K562 (cell line): ENCODE measurements at regions of chr6 and their contacts with region 1.

Region 1: DNA sequence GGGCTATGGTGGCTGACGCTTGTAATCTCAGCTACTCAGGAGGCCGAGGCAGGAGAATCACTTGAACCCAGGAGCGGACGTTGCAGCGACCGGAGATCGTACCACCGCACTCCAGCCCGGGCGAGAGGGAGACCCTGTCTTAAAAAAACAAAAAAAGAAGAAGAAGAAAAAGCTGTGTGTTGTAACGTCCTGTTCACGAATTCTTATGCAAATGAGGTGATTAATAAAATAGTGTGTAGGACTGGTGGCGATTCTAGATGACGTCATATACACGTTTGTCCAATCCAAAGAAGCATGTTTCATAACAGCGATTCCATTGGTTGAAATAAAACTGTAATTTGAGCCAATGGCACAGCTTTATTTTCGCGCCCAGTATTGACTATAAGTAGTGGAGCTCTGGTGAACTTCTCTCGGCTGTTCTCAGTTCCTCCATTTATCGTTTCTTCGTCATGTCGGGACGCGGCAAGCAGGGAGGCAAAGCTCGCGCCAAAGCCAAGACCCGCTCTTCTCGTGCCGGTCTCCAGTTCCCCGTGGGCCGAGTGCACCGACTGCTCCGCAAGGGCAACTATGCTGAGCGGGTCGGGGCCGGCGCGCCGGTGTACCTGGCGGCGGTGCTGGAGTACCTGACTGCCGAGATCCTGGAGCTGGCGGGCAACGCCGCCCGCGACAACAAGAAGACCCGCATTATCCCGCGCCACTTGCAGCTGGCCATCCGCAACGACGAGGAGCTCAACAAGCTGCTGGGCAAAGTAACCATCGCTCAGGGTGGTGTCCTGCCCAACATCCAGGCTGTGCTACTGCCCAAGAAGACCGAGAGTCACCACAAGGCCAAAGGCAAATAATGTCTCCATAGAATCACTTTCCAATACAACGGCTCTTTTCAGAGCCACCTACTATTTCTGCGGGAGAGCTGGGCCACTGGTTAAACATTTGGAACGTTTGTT is 47.0 kb downstream of the OR2B2 start:
- DNase-seq: peak; percentile 38 to 84 (median 68)
- ATAC-seq: peak; percentile 49
- H3K4me3 ChIP-seq: peak overlapping the region; percentile 45
- H3K27ac ChIP-seq: peak overlapping the region; percentile 73
- H3K4me1 ChIP-seq: peaks cover 15 to 16% of the 10 kb centered on the region in 2 experiments; a peak in 4 of 5 replicates
- H3K27me3 ChIP-seq: no peaks in the 10 kb centered on the region
- CTCF ChIP-seq: no peak
- EP300 ChIP-seq: no peak
- POLR2A ChIP-seq: peak; percentile 96
- RAD21 ChIP-seq: no peak

Region 2: GRCh38 chr6:27825025-27825793 is 40.0 kb before region 1 on chr6:
- CTCF ChIA-PET with region 1: no interaction called
- POLR2A ChIA-PET with region 1: interaction called, 18 read pairs
- in situ Hi-C with region 1: no loop called
- intact Hi-C with region 1: no loop called
- DNase-seq: peak in 1 of 4 experiments; percentile 12
- ATAC-seq: no peak
- H3K4me3 ChIP-seq: peak overlapping the region; percentile 50
- H3K27ac ChIP-seq: peak overlapping the region; percentile 83
- H3K4me1 ChIP-seq: peaks cover 0 to 8% of the 10 kb centered on the region in 2 experiments; a peak in 3 of 5 replicates
- H3K27me3 ChIP-seq: no peaks in the 10 kb centered on the region
- CTCF ChIP-seq: no peak
- EP300 ChIP-seq: no peak
- POLR2A ChIP-seq: peak; percentile 38
- RAD21 ChIP-seq: no peak

Region 3: DNA sequence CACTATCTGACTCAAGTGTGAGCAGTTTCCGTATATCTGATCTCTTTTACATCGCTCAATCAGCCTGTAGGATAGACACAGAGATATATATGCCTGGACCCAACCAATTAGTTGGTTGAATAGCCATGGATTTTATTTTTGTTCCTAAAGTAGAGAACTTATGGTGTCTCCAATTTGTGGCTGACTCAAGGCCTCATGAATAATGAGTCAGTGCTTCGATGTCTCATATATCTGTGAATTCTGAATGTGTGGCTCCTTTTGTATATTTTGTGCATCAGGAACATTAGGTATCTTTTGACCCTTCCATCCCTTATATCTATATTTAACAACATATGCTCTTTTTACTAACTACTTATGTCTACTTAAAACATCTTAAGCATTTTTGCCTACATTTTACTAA is 17.5 kb before region 1 on chr6:
- CTCF ChIA-PET with region 1: no interaction called
- POLR2A ChIA-PET with region 1: interaction called, 152 read pairs
- in situ Hi-C with region 1: no loop called
- intact Hi-C with region 1: no loop called
- DNase-seq: no peak
- ATAC-seq: peak; percentile 9; the same call in 2 of the 3 replicates
- H3K4me3 ChIP-seq: no peak overlapping the region
- H3K27ac ChIP-seq: no peak overlapping the region
- H3K4me1 ChIP-seq: no peaks in the 10 kb centered on the region
- H3K27me3 ChIP-seq: no peaks in the 10 kb centered on the region
- CTCF ChIP-seq: no peak
- EP300 ChIP-seq: no peak
- POLR2A ChIP-seq: 0 out of 2 replicates have a peak, but pooled peaks have one; percentile 17
- RAD21 ChIP-seq: no peak

Region 4: DNA sequence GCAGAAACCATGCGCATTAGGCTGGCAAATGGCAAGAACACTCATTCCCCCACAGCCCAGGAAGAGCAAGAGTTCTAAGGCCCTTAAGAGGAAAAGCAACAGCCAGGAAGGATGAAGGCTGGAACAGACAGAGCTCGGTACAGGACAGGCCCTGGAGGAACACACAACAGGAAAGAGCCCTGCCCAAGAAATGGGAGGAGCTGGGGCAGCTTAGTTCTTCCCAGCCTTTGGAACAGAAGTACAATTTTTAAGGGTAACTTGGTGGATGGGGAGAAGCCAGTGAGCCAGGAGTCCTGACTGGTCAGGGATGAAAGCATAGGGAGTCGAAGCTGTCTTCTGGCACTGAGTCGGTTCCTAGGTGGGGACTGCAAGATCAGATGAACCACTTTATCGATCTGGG is 14.7 kb after region 1 on chr6:
- CTCF ChIA-PET with region 1: no interaction called
- POLR2A ChIA-PET with region 1: interaction called, 16 read pairs
- in situ Hi-C with region 1: no loop called
- intact Hi-C with region 1: no loop called
- DNase-seq: no peak
- ATAC-seq: peak; percentile 65
- H3K4me3 ChIP-seq: no peak overlapping the region
- H3K27ac ChIP-seq: no peak overlapping the region
- H3K4me1 ChIP-seq: peaks cover 3 to 6% of the 10 kb centered on the region in 2 experiments; a peak in 3 of 5 replicates
- H3K27me3 ChIP-seq: no peaks in the 10 kb centered on the region
- CTCF ChIP-seq: no peak
- EP300 ChIP-seq: no peak
- POLR2A ChIP-seq: no peak
- RAD21 ChIP-seq: no peak